ENCODE measurements at regions of chr9 and their contacts with region 1.

Region 1: GRCh38 chr9:107489687-107490605 is at the start of gene KLF4:
- DNase-seq: peak; percentile 79
- H3K4me3 Mint-ChIP-seq: peak within 1 kb of the TSS; percentile 84
- H3K27ac Mint-ChIP-seq: peak within 1 kb of the TSS; percentile 94
- H3K4me1 Mint-ChIP-seq: peaks cover 44% of the 10 kb centered on the region
- H3K27me3 Mint-ChIP-seq: no peaks in the 10 kb centered on the region
- CTCF ChIP-seq: no peak
- total RNA-seq, gene KLF4: 19.9 and 23.0 TPM in 2 replicates

Region 2: DNA sequence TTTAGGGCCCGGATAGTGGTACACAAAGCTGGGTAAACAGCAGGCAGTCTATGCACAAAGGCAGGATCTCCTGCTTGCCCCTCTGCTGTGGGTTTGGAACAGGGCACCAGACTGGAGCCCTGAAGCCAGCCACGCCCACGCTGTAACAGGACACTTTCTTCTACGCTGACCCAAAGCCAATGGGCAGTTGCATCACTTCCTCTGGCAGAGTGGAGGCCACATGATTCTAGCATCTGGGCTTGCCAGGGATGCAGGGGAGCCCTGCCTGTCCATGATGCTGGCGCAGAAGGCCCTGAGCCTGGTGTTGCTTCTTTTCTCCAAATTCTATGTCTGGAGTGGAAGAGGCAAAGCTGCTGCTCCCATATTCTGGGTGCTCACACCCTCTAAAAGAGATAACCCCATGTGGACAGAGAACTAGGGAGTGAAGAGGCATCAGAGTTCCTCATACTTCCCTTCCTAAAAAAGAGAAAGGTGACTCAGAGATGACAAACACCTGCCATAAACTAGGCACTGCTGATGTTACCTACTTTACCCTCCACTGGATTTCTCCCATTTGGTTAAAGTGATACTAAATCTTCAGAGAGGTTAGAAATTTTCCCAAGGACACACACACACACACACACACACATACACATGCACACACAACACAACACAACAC is 260.0 kb after region 1 on chr9:
- CTCF ChIA-PET with region 1: no interaction called
- intact Hi-C with region 1: loop called (anchors 5 kb)
- DNase-seq: peak; percentile 75
- H3K4me3 Mint-ChIP-seq: no peak overlapping the region
- H3K27ac Mint-ChIP-seq: peak overlapping the region; percentile 97
- H3K4me1 Mint-ChIP-seq: peaks cover 54% of the 10 kb centered on the region
- H3K27me3 Mint-ChIP-seq: no peaks in the 10 kb centered on the region
- CTCF ChIP-seq: no peak

Region 3: GRCh38 chr9:108412755-108413154 is 922.8 kb after region 1 on chr9:
- CTCF ChIA-PET with region 1: no interaction called
- intact Hi-C with region 1: loop called (anchors 10 kb)
- DNase-seq: peak; percentile 5
- H3K4me3 Mint-ChIP-seq: no peak overlapping the region
- H3K27ac Mint-ChIP-seq: no peak overlapping the region
- H3K4me1 Mint-ChIP-seq: no peaks in the 10 kb centered on the region
- H3K27me3 Mint-ChIP-seq: no peaks in the 10 kb centered on the region
- CTCF ChIP-seq: no peak

Measured in Calu3 (cell line).